Calu3 (cell line): ENCODE measurements at regions of chr1 and their contacts with region 1.

Region 1: GRCh38 chr1:205477759-205478247 is 22.0 kb upstream of the BLACAT1 start:
- DNase-seq: peak; percentile 96
- H3K4me3 Mint-ChIP-seq: peak overlapping the region; percentile 29
- H3K27ac Mint-ChIP-seq: peak overlapping the region; percentile 68
- H3K4me1 Mint-ChIP-seq: peaks cover 30% of the 10 kb centered on the region
- H3K27me3 Mint-ChIP-seq: peaks cover 44% of the 10 kb centered on the region
- CTCF ChIP-seq: no peak

Region 2: GRCh38 chr1:205416322-205416721 is 61.5 kb before region 1 on chr1:
- CTCF ChIA-PET with region 1: no interaction called
- intact Hi-C with region 1: no loop called
- DNase-seq: no peak
- H3K4me3 Mint-ChIP-seq: no peak overlapping the region
- H3K27ac Mint-ChIP-seq: no peak overlapping the region
- H3K4me1 Mint-ChIP-seq: no peaks in the 10 kb centered on the region
- H3K27me3 Mint-ChIP-seq: peaks cover 41% of the 10 kb centered on the region
- CTCF ChIP-seq: no peak

Region 3: GRCh38 chr1:205449750-205450443 is 27.9 kb before region 1 on chr1:
- CTCF ChIA-PET with region 1: interaction called, 20 read pairs
- intact Hi-C with region 1: no loop called
- DNase-seq: peak; percentile 97
- H3K4me3 Mint-ChIP-seq: peak overlapping the region; percentile 100
- H3K27ac Mint-ChIP-seq: peak overlapping the region; percentile 98
- H3K4me1 Mint-ChIP-seq: peaks cover 50% of the 10 kb centered on the region
- H3K27me3 Mint-ChIP-seq: peaks cover 22% of the 10 kb centered on the region
- CTCF ChIP-seq: no peak

Region 4: DNA sequence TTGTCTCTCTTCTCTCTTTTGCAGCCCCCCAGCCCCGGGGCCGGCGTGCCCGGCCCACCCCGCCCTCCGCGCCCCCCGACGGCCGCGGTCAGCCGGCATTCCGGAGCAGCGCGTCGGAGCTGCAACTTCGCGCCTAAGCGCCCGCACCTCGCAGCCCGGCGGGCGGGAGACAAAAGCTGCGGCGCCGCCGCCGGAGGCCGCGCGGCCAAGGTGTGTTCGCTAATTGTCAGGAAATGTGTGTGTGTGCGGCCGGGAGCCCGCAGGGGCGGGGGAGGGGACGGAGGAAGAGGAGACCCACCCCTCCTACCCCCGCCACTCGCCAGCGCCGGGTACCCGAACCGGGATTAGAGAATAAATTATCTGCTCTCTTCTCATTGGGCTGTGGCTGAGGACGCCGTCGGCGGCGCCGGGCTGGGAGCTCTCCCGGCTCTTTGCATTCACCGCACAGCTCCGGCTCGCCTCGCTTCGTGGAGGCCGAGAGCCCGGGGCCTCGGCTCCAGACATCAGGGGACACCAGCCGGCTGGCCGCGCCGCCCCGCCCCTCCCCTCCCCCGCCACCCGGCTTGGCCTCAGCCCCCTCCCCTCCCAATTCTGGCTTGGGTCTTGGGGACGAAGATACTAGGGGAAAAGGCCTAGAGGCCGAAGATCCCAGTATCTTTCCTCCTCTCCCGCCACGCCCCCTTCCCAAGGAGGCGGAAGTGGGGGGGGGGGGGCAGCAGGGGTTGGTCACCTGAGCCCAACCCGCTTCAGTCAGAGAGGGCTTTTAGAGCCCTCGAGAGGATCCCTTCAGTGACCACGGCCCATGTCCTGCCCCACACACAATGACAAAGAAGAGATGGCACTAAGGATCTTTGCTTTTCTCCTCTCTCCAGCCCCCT is 20.7 kb before region 1 on chr1:
- CTCF ChIA-PET with region 1: interaction called, 10 read pairs
- intact Hi-C with region 1: no loop called
- DNase-seq: peak; percentile 43
- H3K4me3 Mint-ChIP-seq: peak overlapping the region; percentile 7
- H3K27ac Mint-ChIP-seq: no peak overlapping the region
- H3K4me1 Mint-ChIP-seq: peaks cover 17% of the 10 kb centered on the region
- H3K27me3 Mint-ChIP-seq: peaks cover 81% of the 10 kb centered on the region
- CTCF ChIP-seq: no peak